Panc1 (cell line): ENCODE measurements at regions of chr4 and their contacts with region 1.

Region 1: GRCh38 chr4:110516106-110516922 is 40.4 kb downstream of the ENPEP start:
- DNase-seq: peak; percentile 28
- ATAC-seq: peak; percentile 92
- H3K4me3 ChIP-seq: peak overlapping the region; percentile 35 to 37
- H3K27ac ChIP-seq: no peak overlapping the region
- H3K4me1 ChIP-seq: no peaks in the 10 kb centered on the region
- H3K27me3 ChIP-seq: no peaks in the 10 kb centered on the region
- CTCF ChIP-seq: peak; percentile 76

Region 2: GRCh38 chr4:109998867-109999584 is 517.3 kb before region 1 on chr4:
- CTCF ChIA-PET with region 1: no interaction called
- POLR2A ChIA-PET with region 1: no interaction called
- in situ Hi-C with region 1: no loop called
- intact Hi-C with region 1: loop called (anchors 2 kb)
- DNase-seq: peak; percentile 35
- ATAC-seq: peak; percentile 68
- H3K4me3 ChIP-seq: no peak overlapping the region
- H3K27ac ChIP-seq: no peak overlapping the region
- H3K4me1 ChIP-seq: no peaks in the 10 kb centered on the region
- H3K27me3 ChIP-seq: no peaks in the 10 kb centered on the region
- CTCF ChIP-seq: peak; percentile 59; the same call in 1 of the 2 replicates

Region 3: DNA sequence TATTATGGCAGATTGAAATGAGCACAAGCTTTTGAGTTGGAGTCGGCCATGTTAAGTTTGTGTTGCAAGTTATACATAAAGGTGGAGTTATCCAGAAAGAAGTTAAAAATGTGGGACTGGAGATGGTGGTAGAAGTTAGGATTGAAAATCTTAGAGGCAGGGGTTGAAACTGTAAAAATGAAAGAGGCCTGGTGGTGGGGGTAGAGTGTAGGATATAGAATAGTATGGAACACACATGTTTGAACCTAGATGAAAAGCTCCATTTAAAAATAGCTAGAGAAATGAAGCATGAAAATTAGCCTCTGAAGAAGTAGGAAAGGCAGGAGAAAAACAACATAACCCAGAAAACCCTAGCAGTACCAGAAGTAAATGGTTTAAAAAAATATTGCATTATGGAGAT is 172.2 kb before region 1 on chr4:
- CTCF ChIA-PET with region 1: no interaction called
- POLR2A ChIA-PET with region 1: no interaction called
- in situ Hi-C with region 1: no loop called
- intact Hi-C with region 1: loop called (anchors 10 kb)
- DNase-seq: no peak
- ATAC-seq: no peak
- H3K4me3 ChIP-seq: no peak overlapping the region
- H3K27ac ChIP-seq: no peak overlapping the region
- H3K4me1 ChIP-seq: no peaks in the 10 kb centered on the region
- H3K27me3 ChIP-seq: no peaks in the 10 kb centered on the region
- CTCF ChIP-seq: no peak